ENCODE measurements at regions of chrX and their contacts with region 1.

Region 1: GRCh38 chrX:109485470-109486340 is 3.8 kb upstream of the GUCY2F start:
- DNase-seq: peak in 1 of 2 donors; percentile 25
- ATAC-seq: peak in 1 of 2 donors; percentile 56
- H3K4me3 ChIP-seq: no peak overlapping the region
- H3K27ac ChIP-seq: no peak overlapping the region
- H3K4me1 ChIP-seq: no peaks in the 10 kb centered on the region
- H3K27me3 ChIP-seq: peaks cover 0 to 3% (median 0%) of the 10 kb centered on the region in 3 donors
- CTCF ChIP-seq: peak; percentile 67 to 95 (median 81)
- POLR2A ChIP-seq: no peak

Region 2: DNA sequence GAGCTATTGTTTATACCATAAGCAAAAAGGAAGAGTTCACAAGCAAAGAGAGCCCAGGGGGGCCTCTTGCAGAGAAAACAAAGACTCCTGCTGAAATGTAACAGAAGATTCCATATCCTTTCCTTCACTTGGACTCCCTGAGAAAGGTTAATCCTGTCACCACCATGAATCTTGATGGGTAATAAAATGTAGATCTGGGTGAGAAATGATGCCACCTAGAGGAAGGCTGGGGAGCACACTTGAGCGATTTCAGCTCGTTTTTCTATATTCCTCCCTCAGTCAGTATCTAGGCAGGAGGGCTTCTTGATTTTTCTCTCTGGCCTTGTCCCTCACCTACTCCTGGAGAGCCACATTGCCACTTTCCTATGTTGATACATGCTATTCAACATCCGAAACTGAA is 149.5 kb after region 1 on chrX:
- in situ Hi-C with region 1: loop called in 2 of 4 experiments (anchors 10 to 25 kb)
- intact Hi-C with region 1: loop called (anchors 5 kb)
- DNase-seq: no peak
- ATAC-seq: no peak
- H3K4me3 ChIP-seq: no peak overlapping the region
- H3K27ac ChIP-seq: no peak overlapping the region
- H3K4me1 ChIP-seq: no peaks in the 10 kb centered on the region
- H3K27me3 ChIP-seq: peaks cover 0 to 3% (median 0%) of the 10 kb centered on the region in 3 donors
- CTCF ChIP-seq: peak in 2 of 5 experiments; percentile 13 to 46
- POLR2A ChIP-seq: no peak

Region 3: DNA sequence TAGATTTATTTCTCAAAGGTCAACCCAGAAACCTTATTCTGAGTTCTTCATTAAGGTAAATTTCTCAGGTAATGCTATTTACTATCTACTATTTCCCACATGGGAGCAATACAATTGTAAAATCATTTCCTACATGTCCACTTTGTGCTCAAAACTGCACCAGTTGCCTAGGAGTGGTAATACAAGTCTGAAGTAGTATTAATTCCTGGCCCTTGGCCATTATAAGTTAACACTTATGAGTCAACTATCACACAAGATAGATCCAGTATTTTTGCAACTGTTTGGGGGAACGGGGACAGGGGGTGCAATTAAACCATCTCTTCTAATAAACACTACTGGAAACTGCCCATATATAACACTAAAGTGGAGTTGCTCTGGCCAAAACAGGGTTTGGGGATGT is 198.4 kb after region 1 on chrX:
- in situ Hi-C with region 1: no loop called
- intact Hi-C with region 1: no loop called
- DNase-seq: no peak
- ATAC-seq: no peak
- H3K4me3 ChIP-seq: no peak overlapping the region
- H3K27ac ChIP-seq: no peak overlapping the region
- H3K4me1 ChIP-seq: no peaks in the 10 kb centered on the region
- H3K27me3 ChIP-seq: no peaks in the 10 kb centered on the region
- CTCF ChIP-seq: no peak
- POLR2A ChIP-seq: no peak

Region 4: DNA sequence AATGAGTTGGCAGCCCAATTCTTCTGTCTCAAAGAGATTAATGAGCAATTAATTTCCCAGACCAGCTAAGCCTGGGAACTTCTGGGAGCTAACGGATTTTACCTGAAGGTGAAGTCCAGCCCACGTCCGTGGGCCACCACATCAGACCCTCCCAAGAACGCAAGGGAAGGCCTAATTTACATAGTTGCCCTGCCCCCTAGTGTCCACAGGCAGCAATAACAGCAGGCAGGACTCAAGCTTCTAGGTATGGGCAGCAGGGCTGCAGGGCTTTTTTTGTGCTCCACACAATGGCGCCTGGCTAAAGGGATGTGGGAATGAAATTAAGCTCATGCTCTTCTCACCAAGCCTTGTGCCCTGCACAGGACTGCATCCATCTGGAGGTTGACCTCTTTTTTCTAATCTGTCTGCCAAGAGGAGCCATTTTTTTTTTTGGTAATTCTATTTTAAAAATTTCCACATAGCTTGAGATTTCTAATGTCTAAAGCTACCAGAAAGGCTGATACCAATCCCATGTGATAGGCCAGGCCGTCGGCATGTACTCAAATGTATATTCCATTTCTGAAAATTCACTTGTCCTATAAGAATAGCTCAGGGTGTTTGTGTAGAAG is 405.3 kb after region 1 on chrX:
- in situ Hi-C with region 1: loop called (anchors 10 to 25 kb)
- intact Hi-C with region 1: loop called (anchors 2 kb)
- DNase-seq: peak; percentile 2 to 15
- ATAC-seq: no peak
- H3K4me3 ChIP-seq: no peak overlapping the region
- H3K27ac ChIP-seq: no peak overlapping the region
- H3K4me1 ChIP-seq: no peaks in the 10 kb centered on the region
- H3K27me3 ChIP-seq: peaks cover 0 to 4% (median 0%) of the 10 kb centered on the region in 3 donors
- CTCF ChIP-seq: peak; percentile 38 to 81 (median 55)
- POLR2A ChIP-seq: no peak